GM18951 (cell line): ENCODE measurements at regions of chr5 and their contacts with region 1.

Region 1: GRCh38 chr5:17276445-17276844 is 59.0 kb downstream of the BASP1 start:
- POLR2A ChIP-seq: no peak

Region 2: DNA sequence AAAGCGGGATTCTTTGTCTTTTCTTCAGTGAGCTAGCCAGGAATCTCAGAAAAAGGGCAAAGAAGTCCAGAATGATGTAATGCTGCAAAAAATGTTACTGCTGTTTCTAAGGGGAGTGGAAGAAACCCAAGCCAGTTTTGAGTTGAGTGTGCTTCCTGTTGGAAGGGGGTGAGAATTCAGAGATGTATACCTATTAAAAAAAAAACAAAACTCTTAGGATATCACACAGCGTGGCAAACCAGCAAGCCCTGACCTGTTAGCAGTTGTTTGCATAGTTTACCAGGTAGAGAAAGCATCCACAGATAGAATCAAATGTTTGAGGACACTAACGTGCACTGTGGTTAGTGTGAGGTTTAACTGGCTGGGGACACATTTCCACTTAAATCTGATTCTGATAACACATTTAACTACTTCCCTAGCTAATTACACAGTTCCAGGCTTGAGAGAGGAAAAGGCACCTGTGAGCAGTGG is 47.6 kb before region 1 on chr5:
- in situ Hi-C with region 1: loop called (anchors 10 kb)
- POLR2A ChIP-seq: no peak